Naive thymus-derived CD4-positive, alpha-beta T cell (primary cell): ENCODE measurements at regions of chr16 and their contacts with region 1.

Region 1: DNA sequence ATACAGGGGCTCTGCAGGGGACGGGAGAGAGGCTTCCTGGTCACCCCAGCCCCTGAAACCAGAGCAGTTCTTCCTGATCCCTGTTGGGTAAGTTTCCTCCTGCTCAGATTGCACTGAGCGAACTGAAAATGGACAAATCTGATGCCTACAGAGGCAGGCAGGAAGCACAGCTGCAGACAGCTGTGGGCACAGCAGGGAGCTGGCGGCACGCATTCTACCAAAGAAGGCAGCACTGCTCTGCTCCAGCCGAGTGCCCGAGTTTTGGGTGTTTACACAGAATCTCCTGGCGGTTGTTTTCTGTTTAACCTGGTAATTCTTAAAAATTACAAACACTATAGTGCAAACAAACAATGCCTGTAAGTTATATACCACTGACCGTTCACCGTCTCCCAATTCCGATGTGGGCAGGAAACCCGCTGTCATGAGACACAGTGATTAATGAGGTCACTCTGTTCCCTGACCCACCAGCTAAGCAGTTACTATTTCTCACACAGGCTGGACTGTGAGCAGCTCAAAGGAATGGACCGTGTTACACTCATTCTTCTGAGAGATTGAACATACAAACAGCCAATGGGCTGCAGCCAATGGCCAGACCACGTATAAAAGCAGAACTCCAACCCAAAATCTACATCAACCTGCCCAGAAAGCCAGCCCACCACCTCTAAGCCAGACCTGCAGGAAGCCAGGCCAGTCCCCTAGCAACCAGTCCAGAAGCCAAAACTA is 25.5 kb downstream of the NSMCE1 start:
- DNase-seq: peak in 7 of 9 donors; percentile 21 to 52 (median 39)
- ATAC-seq: peak; percentile 68
- H3K4me3 ChIP-seq: peak overlapping the region; percentile 38
- H3K4me3 Mint-ChIP-seq: peak overlapping the region in 9 of 10 donors; percentile 46 to 76 (median 66)
- H3K27ac ChIP-seq: no peak overlapping the region
- H3K27ac Mint-ChIP-seq: peak overlapping the region; percentile 56 to 95 (median 85)
- H3K4me1 ChIP-seq: peaks cover 6 to 25% of the 10 kb centered on the region in 2 donors
- H3K4me1 Mint-ChIP-seq: peaks cover 53 to 90% (median 82%) of the 10 kb centered on the region in 7 donors
- H3K27me3 ChIP-seq: no peaks in the 10 kb centered on the region
- H3K27me3 Mint-ChIP-seq: no peaks in the 10 kb centered on the region

Region 2: DNA sequence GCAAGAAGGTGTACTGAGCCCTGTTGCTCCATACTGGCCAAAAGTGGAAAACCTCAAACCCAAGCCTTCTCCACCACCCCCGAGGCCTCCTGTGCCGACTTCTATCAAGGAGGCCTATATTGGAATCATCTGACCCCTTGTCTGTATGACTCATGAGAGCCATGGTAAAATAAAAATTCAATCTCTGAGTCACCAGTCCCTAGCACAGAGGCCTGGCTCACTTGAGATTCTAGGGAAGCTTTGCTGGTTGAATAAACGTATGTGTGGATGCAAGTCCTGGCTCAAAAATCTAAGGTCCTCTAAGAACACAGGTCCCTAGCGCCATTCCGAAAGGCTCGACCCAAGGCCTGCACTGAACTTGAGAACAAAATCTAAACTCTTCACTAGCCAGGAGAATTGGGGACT is 10.5 kb after region 1 on chr16:
- CTCF ChIA-PET with region 1: no interaction called
- POLR2A ChIA-PET with region 1: interaction called, 142 read pairs
- intact Hi-C with region 1: loop called (anchors 1 kb)
- DNase-seq: peak in 1 of 9 donors; percentile 41
- ATAC-seq: no peak
- H3K4me3 ChIP-seq: peak overlapping the region; percentile 11
- H3K4me3 Mint-ChIP-seq: peak overlapping the region in 9 of 10 donors; percentile 54 to 76 (median 65)
- H3K27ac ChIP-seq: peak overlapping the region; percentile 47
- H3K27ac Mint-ChIP-seq: peak overlapping the region; percentile 49 to 95 (median 85)
- H3K4me1 ChIP-seq: peaks cover 4 to 31% of the 10 kb centered on the region in 2 donors
- H3K4me1 Mint-ChIP-seq: peaks cover 40 to 81% (median 77%) of the 10 kb centered on the region in 7 donors
- H3K27me3 ChIP-seq: no peaks in the 10 kb centered on the region
- H3K27me3 Mint-ChIP-seq: no peaks in the 10 kb centered on the region